Transverse colon (tissue), 4 donors: ENCODE measurements at regions of chr15 and their contacts with region 1.

Region 1: GRCh38 chr15:88788816-88789215 is 14.4 kb upstream of the ACAN start:
- DNase-seq: no peak
- H3K4me3 ChIP-seq: no peak overlapping the region
- H3K27ac ChIP-seq: no peak overlapping the region
- H3K4me1 ChIP-seq: no peaks in the 10 kb centered on the region
- H3K27me3 ChIP-seq: peaks cover 8% of the 10 kb centered on the region
- CTCF ChIP-seq: no peak
- EP300 ChIP-seq: no peak
- POLR2A ChIP-seq: no peak

Region 2: DNA sequence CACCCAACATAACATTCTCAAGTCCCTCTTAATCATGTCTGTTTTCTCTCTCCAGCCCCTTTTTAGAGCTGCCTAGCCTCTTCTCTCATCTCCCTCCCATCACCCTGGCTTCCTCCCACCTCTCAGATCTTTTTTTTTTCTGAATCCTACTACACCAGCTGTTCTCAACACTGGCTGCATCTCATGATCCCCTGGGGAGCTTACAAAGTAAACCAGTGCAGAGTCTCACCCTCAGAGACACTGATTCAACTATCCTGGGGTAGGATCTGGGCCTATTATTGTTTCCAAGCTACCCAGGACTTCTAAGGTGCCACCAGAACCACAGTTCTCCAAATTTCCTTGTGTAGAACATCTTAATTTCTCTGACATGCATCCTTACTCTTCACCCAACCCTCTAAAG is 35.9 kb before region 1 on chr15:
- in situ Hi-C with region 1: no loop called
- intact Hi-C with region 1: no loop called
- DNase-seq: no peak
- H3K4me3 ChIP-seq: no peak overlapping the region
- H3K27ac ChIP-seq: no peak overlapping the region
- H3K4me1 ChIP-seq: no peaks in the 10 kb centered on the region
- H3K27me3 ChIP-seq: no peaks in the 10 kb centered on the region
- CTCF ChIP-seq: no peak
- EP300 ChIP-seq: no peak
- POLR2A ChIP-seq: no peak

Region 3: DNA sequence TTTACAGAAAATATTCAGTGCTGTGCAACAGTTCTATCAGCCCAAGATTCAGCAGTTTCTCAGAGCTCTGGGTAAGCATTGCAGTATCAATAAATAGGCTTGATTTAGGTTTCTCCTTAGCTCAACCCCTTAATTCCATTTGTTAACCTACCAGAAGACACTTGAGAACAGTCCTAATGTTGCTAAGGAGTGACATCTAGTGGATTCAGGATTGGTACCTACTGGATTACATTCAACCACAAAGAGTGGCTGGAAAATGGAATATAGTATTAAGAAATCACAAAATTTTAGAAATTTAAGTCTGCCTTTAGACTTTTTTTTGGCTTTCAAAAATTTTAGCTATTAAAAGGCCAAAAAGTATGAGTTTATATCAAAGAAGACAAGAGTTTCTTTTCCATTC is 511.1 kb after region 1 on chr15:
- in situ Hi-C with region 1: no loop called
- intact Hi-C with region 1: loop called (anchors 5 kb)
- DNase-seq: no peak
- H3K4me3 ChIP-seq: no peak overlapping the region
- H3K27ac ChIP-seq: no peak overlapping the region
- H3K4me1 ChIP-seq: no peaks in the 10 kb centered on the region
- H3K27me3 ChIP-seq: no peaks in the 10 kb centered on the region
- CTCF ChIP-seq: peak in 1 of 5 experiments; percentile 17
- EP300 ChIP-seq: no peak
- POLR2A ChIP-seq: no peak